Mammary epithelial cell (primary cell): ENCODE measurements at regions of chr21 and their contacts with region 1.

Region 1: GRCh38 chr21:35256467-35256988 is 207.4 kb upstream of the RUNX1 start:
- DNase-seq: peak; percentile 99
- H3K4me3 ChIP-seq: peak overlapping the region; percentile 3 to 31 (median 7)
- H3K27ac ChIP-seq: peak overlapping the region; percentile 98
- H3K4me1 ChIP-seq: peaks cover 17% of the 10 kb centered on the region
- H3K27me3 ChIP-seq: no peaks in the 10 kb centered on the region
- CTCF ChIP-seq: peak in 1 of 2 donors; percentile 16

Region 2: DNA sequence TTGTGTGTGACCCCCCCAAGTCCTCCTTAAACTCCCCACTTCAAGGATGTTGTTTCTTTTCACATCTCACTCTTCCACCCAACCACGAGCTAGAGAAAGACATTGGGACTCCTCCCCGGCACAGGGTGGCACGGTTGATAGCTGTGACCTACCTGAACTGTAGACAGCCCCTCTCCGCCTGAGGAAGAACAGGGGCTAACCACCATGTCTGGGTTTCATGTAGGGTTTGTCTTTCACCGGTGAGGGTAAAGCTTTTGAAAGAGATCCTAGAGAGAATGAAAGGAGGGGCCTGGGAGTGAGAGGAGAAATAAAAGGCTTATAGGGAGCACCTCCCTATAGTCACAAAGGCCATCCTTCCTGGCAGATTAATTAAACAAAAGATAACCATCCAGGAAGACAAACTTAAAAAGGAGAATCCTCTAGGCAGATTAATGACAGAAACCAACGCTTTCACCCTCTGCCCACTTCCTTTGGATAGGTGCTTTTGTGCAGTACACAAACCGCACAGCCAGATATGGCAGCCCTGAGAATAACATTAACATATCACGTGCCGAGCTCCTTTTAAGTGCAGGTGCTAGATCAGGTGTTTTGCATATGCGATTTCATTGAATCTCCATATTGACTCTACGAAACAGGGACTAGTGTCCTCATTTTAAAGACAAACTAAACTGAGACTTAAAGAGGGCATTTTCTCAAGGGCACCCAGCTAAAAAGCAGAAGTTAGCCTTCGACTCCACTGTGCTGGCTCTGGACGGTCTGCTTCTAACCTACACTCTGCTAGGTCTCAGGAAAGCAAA is 29.4 kb before region 1 on chr21:
- CTCF ChIA-PET with region 1: no interaction called
- dilution Hi-C with region 1: no loop called
- in situ Hi-C with region 1: no loop called
- intact Hi-C with region 1: no loop called
- DNase-seq: no peak
- H3K4me3 ChIP-seq: no peak overlapping the region
- H3K27ac ChIP-seq: no peak overlapping the region
- H3K4me1 ChIP-seq: peaks cover 21% of the 10 kb centered on the region
- H3K27me3 ChIP-seq: no peaks in the 10 kb centered on the region
- CTCF ChIP-seq: no peak

Region 3: DNA sequence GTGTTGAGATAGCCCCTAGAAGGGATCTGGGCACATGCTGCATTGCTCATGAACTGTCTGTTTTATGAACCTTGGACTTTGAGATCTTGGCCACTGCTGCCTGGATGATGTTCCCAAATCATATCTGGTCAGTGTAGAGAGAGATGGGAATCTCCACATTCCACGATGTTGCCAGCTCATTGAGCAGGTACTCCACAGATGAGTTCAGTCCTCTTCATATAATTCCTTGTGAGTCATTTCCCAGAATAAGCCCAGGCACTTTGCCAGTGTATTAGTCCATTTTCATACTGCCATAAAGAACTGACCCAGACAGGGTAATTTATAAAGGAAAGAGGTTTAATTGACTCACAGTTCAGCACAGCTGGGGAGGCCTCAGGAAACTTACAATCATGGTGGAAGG is 46.6 kb after region 1 on chr21:
- CTCF ChIA-PET with region 1: no interaction called
- dilution Hi-C with region 1: no loop called
- in situ Hi-C with region 1: no loop called
- intact Hi-C with region 1: loop called (anchors 5 kb)
- DNase-seq: peak; percentile 95
- H3K4me3 ChIP-seq: no peak overlapping the region
- H3K27ac ChIP-seq: peak overlapping the region; percentile 25
- H3K4me1 ChIP-seq: peaks cover 13% of the 10 kb centered on the region
- H3K27me3 ChIP-seq: no peaks in the 10 kb centered on the region
- CTCF ChIP-seq: no peak

Region 4: GRCh38 chr21:35375115-35375514 is 118.6 kb after region 1 on chr21:
- CTCF ChIA-PET with region 1: no interaction called
- dilution Hi-C with region 1: no loop called
- in situ Hi-C with region 1: no loop called
- intact Hi-C with region 1: loop called (anchors 5 kb)
- DNase-seq: peak; percentile 77
- H3K4me3 ChIP-seq: no peak overlapping the region
- H3K27ac ChIP-seq: peak overlapping the region; percentile 42
- H3K4me1 ChIP-seq: peaks cover 37% of the 10 kb centered on the region
- H3K27me3 ChIP-seq: no peaks in the 10 kb centered on the region
- CTCF ChIP-seq: no peak